HepG2 (cell line): ENCODE measurements at regions of chr1 and their contacts with region 1.

Region 1: GRCh38 chr1:231421993-231422764 is at the start of gene EGLN1:
- DNase-seq: peak; percentile 82
- ATAC-seq: peak; percentile 89
- H3K4me3 ChIP-seq: peak within 1 kb of the TSS; percentile 89 to 100 (median 99)
- H3K27ac ChIP-seq: peak within 1 kb of the TSS; percentile 99
- H3K4me1 ChIP-seq: peaks cover 24% of the 10 kb centered on the region
- H3K27me3 ChIP-seq: no peaks in the 10 kb centered on the region; a peak in 1 of 5 replicates
- CTCF ChIP-seq: peak; percentile 69
- EP300 ChIP-seq: peak in 1 of 2 experiments; percentile 36; a peak in 1 of 4 replicates
- POLR2A ChIP-seq: peak; percentile 85 to 90
- RAD21 ChIP-seq: peak; percentile 83
- total RNA-seq, gene EGLN1: 34.4 and 38.2 TPM in 2 replicates

Region 2: GRCh38 chr1:231383159-231383860 is 38.9 kb before region 1 on chr1:
- CTCF ChIA-PET with region 1: no interaction called
- POLR2A ChIA-PET with region 1: no interaction called
- in situ Hi-C with region 1: no loop called
- intact Hi-C with region 1: loop called (anchors 5 kb)
- DNase-seq: no peak
- ATAC-seq: peak; percentile 53
- H3K4me3 ChIP-seq: no peak overlapping the region
- H3K27ac ChIP-seq: no peak overlapping the region
- H3K4me1 ChIP-seq: peaks cover 54% of the 10 kb centered on the region
- H3K27me3 ChIP-seq: no peaks in the 10 kb centered on the region
- CTCF ChIP-seq: no peak
- EP300 ChIP-seq: no peak
- POLR2A ChIP-seq: no peak
- RAD21 ChIP-seq: no peak

Region 3: GRCh38 chr1:231528172-231529029 is 106.2 kb after region 1 on chr1 and contains the start of gene TSNAX:
- CTCF ChIA-PET with region 1: no interaction called
- POLR2A ChIA-PET with region 1: interaction called, 4 read pairs
- in situ Hi-C with region 1: loop called (anchors 10 kb)
- intact Hi-C with region 1: loop called (anchors 1 kb)
- DNase-seq: peak; percentile 88
- ATAC-seq: peak; percentile 97
- H3K4me3 ChIP-seq: peak within 1 kb of the TSS; percentile 75 to 86 (median 82)
- H3K27ac ChIP-seq: peak within 1 kb of the TSS; percentile 95
- H3K4me1 ChIP-seq: peaks cover 46% of the 10 kb centered on the region
- H3K27me3 ChIP-seq: no peaks in the 10 kb centered on the region; a peak in 1 of 5 replicates
- CTCF ChIP-seq: no peak
- EP300 ChIP-seq: peak in 1 of 2 experiments; percentile 5; a peak in 1 of 4 replicates
- POLR2A ChIP-seq: peak; percentile 85 to 91
- RAD21 ChIP-seq: no peak
- total RNA-seq, gene TSNAX: 46.2 and 69.1 TPM in 2 replicates

Region 4: GRCh38 chr1:231534703-231535159 is 112.6 kb after region 1 on chr1:
- CTCF ChIA-PET with region 1: no interaction called
- POLR2A ChIA-PET with region 1: no interaction called
- in situ Hi-C with region 1: loop called (anchors 10 kb)
- intact Hi-C with region 1: no loop called
- DNase-seq: no peak
- ATAC-seq: no peak
- H3K4me3 ChIP-seq: no peak overlapping the region
- H3K27ac ChIP-seq: no peak overlapping the region
- H3K4me1 ChIP-seq: peaks cover 26% of the 10 kb centered on the region
- H3K27me3 ChIP-seq: no peaks in the 10 kb centered on the region
- CTCF ChIP-seq: no peak
- EP300 ChIP-seq: no peak
- POLR2A ChIP-seq: no peak
- RAD21 ChIP-seq: no peak

Region 5: GRCh38 chr1:231550448-231550781 is 128.2 kb after region 1 on chr1:
- CTCF ChIA-PET with region 1: no interaction called
- POLR2A ChIA-PET with region 1: no interaction called
- in situ Hi-C with region 1: no loop called
- intact Hi-C with region 1: loop called (anchors 5 kb)
- DNase-seq: peak; percentile 50
- ATAC-seq: peak; percentile 92
- H3K4me3 ChIP-seq: no peak overlapping the region
- H3K27ac ChIP-seq: no peak overlapping the region
- H3K4me1 ChIP-seq: peaks cover 10% of the 10 kb centered on the region
- H3K27me3 ChIP-seq: no peaks in the 10 kb centered on the region
- CTCF ChIP-seq: peak; percentile 59
- EP300 ChIP-seq: no peak
- POLR2A ChIP-seq: no peak
- RAD21 ChIP-seq: peak; percentile 57